ENCODE measurements at regions of chr5 and their contacts with region 1.

Region 1: GRCh38 chr5:171630027-171630669 is 155.5 kb upstream of the SMIM23 start:
- DNase-seq: no peak
- H3K4me3 ChIP-seq: peak overlapping the region; percentile 20; the same call in 1 of the 2 replicates
- CTCF ChIP-seq: peak; percentile 76

Region 2: GRCh38 chr5:171640480-171640879 is 10.3 kb after region 1 on chr5:
- CTCF ChIA-PET with region 1: interaction called, 23 read pairs
- POLR2A ChIA-PET with region 1: no interaction called
- DNase-seq: no peak
- H3K4me3 ChIP-seq: no peak overlapping the region
- CTCF ChIP-seq: no peak

Region 3: DNA sequence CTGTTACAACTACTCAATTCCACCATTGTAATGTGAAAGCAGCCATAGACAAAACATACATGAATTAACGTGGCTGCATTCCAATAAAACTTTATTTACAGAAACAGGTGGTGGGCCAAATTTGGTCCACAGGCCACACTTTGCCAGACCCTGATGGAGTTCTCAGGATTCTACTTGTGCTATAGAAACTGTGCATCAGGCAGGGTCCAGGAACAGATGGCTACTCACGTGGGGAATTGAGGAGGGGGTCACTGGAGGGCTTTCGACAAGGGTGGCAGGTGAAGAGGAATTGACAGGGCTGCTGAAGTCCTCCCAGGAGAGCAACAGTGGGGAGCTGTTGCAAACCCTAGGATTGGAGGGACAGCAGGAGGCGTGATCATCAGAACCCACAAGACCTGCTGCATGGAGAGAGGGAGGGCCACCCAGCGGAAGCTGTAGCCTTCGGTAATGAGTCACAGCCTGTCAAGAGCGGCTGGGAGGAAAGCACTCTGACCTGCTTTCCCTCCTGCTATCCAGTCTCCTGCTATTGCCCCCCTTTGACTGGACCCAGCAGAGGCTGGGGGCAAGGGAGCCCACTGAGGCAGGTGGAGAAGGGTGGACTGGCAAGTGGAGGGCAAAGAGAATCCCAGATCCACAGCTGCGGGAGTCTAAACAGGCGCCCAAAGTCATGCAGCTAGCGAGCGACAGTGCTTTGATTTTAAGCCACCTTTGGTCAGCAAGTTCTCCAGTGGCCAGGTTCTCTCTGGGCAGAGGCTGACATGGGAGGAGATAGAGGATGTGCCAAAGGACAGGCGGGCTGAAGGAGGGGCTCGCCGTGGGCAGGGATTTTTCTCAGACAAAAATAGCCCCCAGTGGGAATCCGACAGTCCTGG is 17.1 kb after region 1 on chr5:
- CTCF ChIA-PET with region 1: interaction called, 10 read pairs
- POLR2A ChIA-PET with region 1: no interaction called
- DNase-seq: no peak
- H3K4me3 ChIP-seq: no peak overlapping the region
- CTCF ChIP-seq: no peak

Region 4: DNA sequence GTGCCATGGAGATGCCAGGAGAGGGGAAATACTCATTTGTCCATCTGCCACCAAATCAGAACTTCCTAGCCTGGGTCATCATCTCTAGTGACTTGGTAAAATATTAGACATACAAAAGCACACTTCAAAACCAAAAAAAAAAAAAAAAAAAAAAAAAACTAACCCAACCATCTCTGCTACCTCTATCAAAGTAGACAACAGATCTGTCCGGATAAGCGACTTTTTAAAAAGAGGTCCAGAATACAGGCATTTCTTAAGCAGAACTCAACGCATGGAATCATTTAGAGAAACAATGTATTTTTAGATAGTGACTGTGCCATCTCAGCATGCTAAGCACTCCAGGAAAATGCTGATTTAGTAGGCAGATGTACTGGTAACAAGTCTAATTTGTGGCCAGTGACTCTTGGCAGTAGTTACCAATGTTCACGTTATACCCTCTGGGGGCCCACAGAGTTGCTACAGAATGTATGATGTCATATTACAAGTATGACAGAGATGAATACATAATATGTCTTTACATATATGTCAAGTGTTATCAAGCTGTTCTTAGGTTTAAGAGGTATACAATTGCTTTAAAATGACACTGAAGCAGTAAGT is 263.2 kb after region 1 on chr5:
- CTCF ChIA-PET with region 1: interaction called, 10 read pairs
- POLR2A ChIA-PET with region 1: no interaction called
- DNase-seq: peak; percentile 86
- H3K4me3 ChIP-seq: no peak overlapping the region
- CTCF ChIP-seq: no peak